ENCODE measurements at regions of chr14 and their contacts with region 1.

Region 1: GRCh38 chr14:76203086-76204001 is 51.6 kb downstream of the GPATCH2L start:
- DNase-seq: peak; percentile 88
- ATAC-seq: peak; percentile 94
- H3K4me3 ChIP-seq: no peak overlapping the region
- H3K27ac ChIP-seq: peak overlapping the region; percentile 98
- H3K4me1 ChIP-seq: peaks cover 50% of the 10 kb centered on the region
- H3K27me3 ChIP-seq: no peaks in the 10 kb centered on the region
- CTCF ChIP-seq: no peak

Region 2: GRCh38 chr14:75995372-75996041 is 207.8 kb before region 1 on chr14:
- CTCF ChIA-PET with region 1: no interaction called
- POLR2A ChIA-PET with region 1: no interaction called
- intact Hi-C with region 1: no loop called
- DNase-seq: no peak
- ATAC-seq: no peak
- H3K4me3 ChIP-seq: no peak overlapping the region
- H3K27ac ChIP-seq: no peak overlapping the region
- H3K4me1 ChIP-seq: no peaks in the 10 kb centered on the region
- H3K27me3 ChIP-seq: no peaks in the 10 kb centered on the region
- CTCF ChIP-seq: no peak

Region 3: GRCh38 chr14:76151398-76152339 is 51.7 kb before region 1 on chr14 and contains the start of gene GPATCH2L:
- CTCF ChIA-PET with region 1: no interaction called
- POLR2A ChIA-PET with region 1: interaction called, 4 read pairs
- intact Hi-C with region 1: loop called (anchors 5 kb)
- DNase-seq: peak; percentile 92
- ATAC-seq: peak; percentile 87
- H3K4me3 ChIP-seq: peak within 1 kb of the TSS; percentile 98
- H3K27ac ChIP-seq: peak within 1 kb of the TSS; percentile 89
- H3K4me1 ChIP-seq: peaks cover 46% of the 10 kb centered on the region
- H3K27me3 ChIP-seq: no peaks in the 10 kb centered on the region
- CTCF ChIP-seq: no peak
- total RNA-seq, gene GPATCH2L: 43.5 and 46.0 TPM in 2 replicates

Region 4: DNA sequence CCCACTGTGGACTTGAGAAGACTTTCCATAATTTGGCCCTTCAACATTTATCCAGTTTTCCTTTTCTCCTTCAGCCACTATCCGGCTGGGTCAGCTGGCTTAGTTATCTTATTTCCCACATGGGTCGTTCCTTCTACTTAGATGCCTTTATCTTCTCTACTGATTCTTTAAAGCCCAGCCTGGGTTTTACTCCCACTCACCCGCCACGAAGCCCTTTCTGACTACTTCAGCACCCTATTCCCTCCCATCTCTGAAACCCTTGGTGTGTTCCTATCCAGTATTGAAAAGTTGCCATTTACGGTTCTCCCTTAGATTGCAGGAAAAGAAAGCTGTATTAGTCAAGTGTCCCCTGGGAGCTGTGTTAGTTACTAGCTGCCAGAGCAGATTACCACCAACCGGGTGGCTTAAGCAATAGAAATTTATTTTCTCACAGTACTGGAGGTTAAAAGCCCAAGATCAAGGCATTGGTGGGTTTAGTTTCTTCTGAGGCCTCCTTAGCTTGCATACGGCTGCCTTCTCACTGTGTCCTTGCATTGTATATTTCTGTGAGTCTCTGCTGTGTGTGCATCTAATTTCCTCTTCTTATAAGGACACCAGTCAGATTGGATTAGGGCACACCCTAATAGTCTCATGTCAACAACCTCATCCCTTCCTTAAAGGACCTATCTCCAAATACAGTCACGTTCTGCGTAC is 53.9 kb after region 1 on chr14:
- CTCF ChIA-PET with region 1: no interaction called
- POLR2A ChIA-PET with region 1: no interaction called
- intact Hi-C with region 1: no loop called
- DNase-seq: no peak
- ATAC-seq: no peak
- H3K4me3 ChIP-seq: no peak overlapping the region
- H3K27ac ChIP-seq: no peak overlapping the region
- H3K4me1 ChIP-seq: no peaks in the 10 kb centered on the region
- H3K27me3 ChIP-seq: no peaks in the 10 kb centered on the region
- CTCF ChIP-seq: no peak

Region 5: GRCh38 chr14:76280221-76280620 is 76.9 kb after region 1 on chr14:
- CTCF ChIA-PET with region 1: no interaction called
- POLR2A ChIA-PET with region 1: no interaction called
- intact Hi-C with region 1: no loop called
- DNase-seq: no peak
- ATAC-seq: no peak
- H3K4me3 ChIP-seq: no peak overlapping the region
- H3K27ac ChIP-seq: no peak overlapping the region
- H3K4me1 ChIP-seq: no peaks in the 10 kb centered on the region
- H3K27me3 ChIP-seq: no peaks in the 10 kb centered on the region
- CTCF ChIP-seq: no peak

Region 6: DNA sequence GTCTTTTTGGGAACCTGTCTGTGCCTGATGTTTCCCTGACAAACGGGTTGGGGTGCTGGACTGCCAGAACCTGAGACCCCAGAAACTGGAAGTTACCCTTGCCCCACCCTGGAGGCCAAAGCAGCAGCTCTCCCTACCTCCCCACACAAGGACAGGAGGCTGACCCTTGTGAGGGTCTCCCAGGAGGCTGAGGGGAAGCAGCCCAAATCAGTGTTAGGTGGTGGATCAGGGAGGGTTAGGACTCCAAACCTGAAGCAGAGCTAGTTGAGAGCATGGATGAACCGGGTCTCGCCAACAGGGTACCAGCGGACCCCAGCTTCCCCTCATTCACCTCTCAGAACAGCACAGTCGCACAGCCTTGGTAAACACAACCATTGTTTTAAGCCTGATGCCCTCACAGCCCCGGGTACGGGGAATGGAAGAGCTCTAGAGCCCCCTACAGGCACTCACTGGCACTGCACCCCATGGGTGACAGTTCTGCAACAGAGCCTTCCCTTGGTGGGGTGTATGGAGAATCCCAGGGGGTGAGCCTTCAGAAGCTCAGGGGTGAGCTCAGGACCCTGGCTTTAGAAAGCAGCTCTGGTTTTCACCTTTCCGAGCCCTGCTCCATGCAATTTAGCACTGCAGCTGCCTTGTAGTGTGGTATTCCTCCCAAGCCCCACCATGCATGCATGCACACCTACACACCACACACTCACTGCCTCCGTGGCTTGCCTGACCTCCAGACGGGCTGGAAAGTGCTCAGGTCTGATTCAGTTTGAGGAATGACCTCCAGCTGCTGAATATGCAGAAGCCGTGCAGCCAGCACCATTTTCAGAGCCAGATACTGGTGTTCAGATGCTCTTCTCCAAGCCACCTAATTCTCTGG is 183.8 kb after region 1 on chr14:
- CTCF ChIA-PET with region 1: interaction called, 3 read pairs
- POLR2A ChIA-PET with region 1: no interaction called
- intact Hi-C with region 1: loop called (anchors 10 kb)
- DNase-seq: peak; percentile 83
- ATAC-seq: peak; percentile 99
- H3K4me3 ChIP-seq: no peak overlapping the region
- H3K27ac ChIP-seq: no peak overlapping the region
- H3K4me1 ChIP-seq: no peaks in the 10 kb centered on the region
- H3K27me3 ChIP-seq: peaks cover 61% of the 10 kb centered on the region
- CTCF ChIP-seq: peak; percentile 97

Measured in PC-3 (cell line).